ENCODE measurements at regions of chr4 and their contacts with region 1.

Region 1: DNA sequence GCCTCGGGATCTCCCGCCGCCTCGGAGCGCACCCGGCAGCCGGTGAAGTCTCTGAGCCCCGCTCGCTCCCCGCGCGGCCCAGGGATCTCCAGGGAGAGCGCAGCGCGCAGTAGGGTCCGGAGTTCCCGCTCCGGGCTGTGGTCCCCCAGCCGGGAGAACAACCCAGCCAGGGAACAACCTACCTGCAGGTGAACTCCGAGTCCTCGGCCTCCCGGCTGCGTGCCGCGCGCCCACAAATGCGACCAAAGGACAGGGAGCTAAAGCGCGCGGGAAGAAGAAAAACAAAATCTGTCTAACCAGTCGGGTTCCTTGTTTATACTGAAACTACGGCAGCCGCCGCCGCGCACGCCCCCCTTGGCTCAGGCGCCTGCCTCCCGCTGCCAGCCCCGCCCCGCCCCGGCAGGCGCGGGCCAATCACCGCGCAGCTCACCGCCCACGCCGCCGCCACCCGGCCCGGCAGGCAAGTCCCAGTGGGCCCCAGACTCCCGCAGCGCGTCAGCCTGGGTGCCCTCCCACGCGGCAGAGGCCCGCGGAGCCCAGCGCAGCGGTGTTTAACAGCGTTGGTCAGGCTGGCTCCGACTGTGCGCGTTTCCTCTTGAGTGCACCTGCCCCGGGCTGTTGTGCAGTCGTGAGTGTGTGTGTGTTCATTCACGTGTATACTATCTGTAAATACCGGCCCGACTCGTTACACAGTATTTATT is at the start of gene RASGEF1B:
- DNase-seq: peak; percentile 91 to 95 (median 92)
- ATAC-seq: peak; percentile 93 to 99 (median 98)
- H3K4me3 ChIP-seq: peak within 1 kb of the TSS; percentile 70 to 96 (median 87)
- H3K27ac ChIP-seq: peak within 1 kb of the TSS; percentile 62 to 94 (median 86)
- H3K4me1 ChIP-seq: peaks cover 0 to 46% (median 21%) of the 10 kb centered on the region in 12 donors
- H3K27me3 ChIP-seq: no peaks in the 10 kb centered on the region
- CTCF ChIP-seq: peak in 1 of 12 donors; percentile 5
- POLR2A ChIP-seq: peak in 1 of 2 donors; percentile 72
- total RNA-seq, gene RASGEF1B: 1.8 to 11.9 (median 3.2) TPM

Region 2: DNA sequence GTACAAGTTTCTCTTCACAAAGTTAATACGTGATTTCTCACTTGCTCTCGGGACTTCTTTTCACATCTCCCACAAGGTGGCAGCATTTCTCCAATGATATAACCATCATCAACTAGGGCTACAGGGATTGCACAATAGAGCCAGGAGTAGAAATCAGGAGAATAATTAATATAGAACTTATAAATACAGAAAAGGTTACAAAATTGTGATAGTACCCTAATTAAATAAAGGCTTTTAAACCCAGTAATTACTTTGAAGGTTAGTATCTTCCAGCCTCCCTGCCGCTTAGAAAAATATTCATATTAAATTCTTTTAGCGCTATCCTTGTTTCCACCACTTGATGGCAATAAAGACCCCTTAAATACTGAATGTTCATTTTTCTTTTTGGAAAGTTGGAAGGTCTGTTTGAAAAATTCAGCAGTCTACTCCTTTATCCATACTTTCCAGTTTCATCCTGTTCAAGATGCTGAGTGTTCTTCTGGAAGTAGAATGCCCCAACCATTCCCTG is 65.8 kb before region 1 on chr4:
- intact Hi-C with region 1: loop called in 2 of 10 experiments (anchors 5 to 10 kb)
- DNase-seq: peak in 2 of 5 donors; percentile 32 to 49
- ATAC-seq: peak; percentile 57 to 86 (median 72)
- H3K4me3 ChIP-seq: peak overlapping the region in 5 of 12 donors; percentile 14 to 36 (median 27)
- H3K27ac ChIP-seq: no peak overlapping the region
- H3K4me1 ChIP-seq: peaks cover 0 to 10% (median 0%) of the 10 kb centered on the region in 12 donors
- H3K27me3 ChIP-seq: peaks cover 0 to 3% (median 0%) of the 10 kb centered on the region in 9 donors
- CTCF ChIP-seq: peak; percentile 60 to 88 (median 80)
- POLR2A ChIP-seq: no peak

Region 3: DNA sequence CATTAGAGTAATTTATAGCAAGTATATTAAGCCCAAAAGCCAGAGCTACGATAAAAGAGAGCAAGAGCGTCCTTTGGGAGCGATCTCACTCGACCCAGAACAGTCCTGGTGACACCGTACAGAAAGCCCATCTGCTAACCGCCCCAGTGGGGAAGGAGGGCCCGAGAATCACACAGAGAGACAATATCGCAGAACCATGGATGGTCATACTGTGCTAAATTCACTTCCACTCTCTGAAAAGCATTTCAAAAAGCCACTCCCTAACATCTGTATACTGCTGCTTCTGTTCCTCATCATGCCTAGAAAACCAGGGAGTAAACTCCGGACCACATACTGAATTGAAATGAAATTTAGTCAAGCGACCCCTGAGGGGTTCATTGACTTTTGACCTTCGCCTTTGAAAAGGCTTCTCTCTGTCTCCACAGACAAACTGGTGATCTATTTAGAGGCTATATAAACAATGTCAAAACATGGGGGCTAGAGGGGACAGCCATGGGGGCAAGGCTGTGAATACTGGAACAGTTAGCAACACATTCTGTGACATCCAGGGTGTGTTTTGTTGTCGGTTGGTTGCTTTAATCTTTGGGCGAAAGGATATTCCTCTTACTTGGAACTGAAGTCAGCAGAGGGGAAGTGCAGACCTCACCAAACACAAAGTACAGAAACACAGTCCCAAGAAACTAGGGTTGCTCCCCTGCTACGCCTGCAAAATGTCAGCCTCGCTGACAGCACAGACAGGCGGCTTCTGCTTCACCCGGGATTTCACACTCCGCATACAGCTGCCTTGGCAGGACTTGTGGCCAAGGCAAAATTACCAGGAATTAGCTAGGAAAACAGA is 129.0 kb after region 1 on chr4:
- intact Hi-C with region 1: loop called in 2 of 10 experiments (anchors 5 to 10 kb)
- DNase-seq: peak; percentile 66 to 84 (median 77)
- ATAC-seq: peak; percentile 95 to 97 (median 96)
- H3K4me3 ChIP-seq: peak overlapping the region in 2 of 12 donors; percentile 23 to 28
- H3K27ac ChIP-seq: peak overlapping the region in 9 of 12 donors; percentile 3 to 74 (median 62)
- H3K4me1 ChIP-seq: peaks cover 0 to 37% (median 14%) of the 10 kb centered on the region in 12 donors
- H3K27me3 ChIP-seq: no peaks in the 10 kb centered on the region
- CTCF ChIP-seq: no peak
- POLR2A ChIP-seq: no peak

Region 4: DNA sequence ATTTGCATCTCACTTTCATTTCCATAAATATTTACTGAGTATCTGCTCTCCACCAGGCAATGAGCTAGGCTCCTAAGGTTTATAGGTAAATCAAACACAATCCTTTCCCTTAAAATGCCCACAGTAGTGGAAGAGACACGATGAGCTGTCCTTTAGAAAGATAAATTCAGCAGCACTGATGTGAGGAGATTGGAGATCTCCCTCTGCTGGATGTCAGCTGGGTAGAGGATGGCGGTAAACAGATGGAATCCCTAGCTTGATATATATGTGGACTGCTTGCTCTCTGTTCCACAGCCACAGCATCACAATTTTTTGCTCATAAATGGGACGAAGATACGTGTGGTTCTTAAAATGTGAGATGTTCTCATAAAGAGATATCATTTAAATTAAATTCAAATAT is 216.3 kb after region 1 on chr4:
- intact Hi-C with region 1: loop called in 1 of 10 experiments (anchors 10 kb)
- DNase-seq: no peak
- ATAC-seq: no peak
- H3K4me3 ChIP-seq: no peak overlapping the region
- H3K27ac ChIP-seq: no peak overlapping the region
- H3K4me1 ChIP-seq: peaks cover 0 to 11% (median 0%) of the 10 kb centered on the region in 12 donors
- H3K27me3 ChIP-seq: no peaks in the 10 kb centered on the region
- CTCF ChIP-seq: peak in 2 of 12 donors; percentile 13 to 18
- POLR2A ChIP-seq: no peak

Region 5: GRCh38 chr4:81844717-81845116 is 373.0 kb after region 1 on chr4:
- intact Hi-C with region 1: loop called (anchors 1 to 2 kb)
- DNase-seq: peak in 4 of 5 donors; percentile 49 to 67 (median 54)
- ATAC-seq: peak; percentile 80 to 96 (median 88)
- H3K4me3 ChIP-seq: no peak overlapping the region
- H3K27ac ChIP-seq: no peak overlapping the region
- H3K4me1 ChIP-seq: peaks cover 0 to 10% (median 3%) of the 10 kb centered on the region in 12 donors
- H3K27me3 ChIP-seq: no peaks in the 10 kb centered on the region
- CTCF ChIP-seq: peak; percentile 65 to 91 (median 78)
- POLR2A ChIP-seq: no peak

Region 6: GRCh38 chr4:81966676-81967075 is 494.9 kb after region 1 on chr4:
- intact Hi-C with region 1: no loop called
- DNase-seq: no peak
- ATAC-seq: no peak
- H3K4me3 ChIP-seq: no peak overlapping the region
- H3K27ac ChIP-seq: no peak overlapping the region
- H3K4me1 ChIP-seq: no peaks in the 10 kb centered on the region
- H3K27me3 ChIP-seq: no peaks in the 10 kb centered on the region
- CTCF ChIP-seq: no peak
- POLR2A ChIP-seq: no peak

Region 7: GRCh38 chr4:82201805-82202641 is 730.3 kb after region 1 on chr4:
- intact Hi-C with region 1: loop called in 4 of 10 experiments (anchors 5 kb)
- DNase-seq: peak in 2 of 5 donors; percentile 10 to 40
- ATAC-seq: peak in 1 of 4 donors; percentile 51
- H3K4me3 ChIP-seq: no peak overlapping the region
- H3K27ac ChIP-seq: no peak overlapping the region
- H3K4me1 ChIP-seq: no peaks in the 10 kb centered on the region
- H3K27me3 ChIP-seq: no peaks in the 10 kb centered on the region
- CTCF ChIP-seq: peak; percentile 19 to 60 (median 52)
- POLR2A ChIP-seq: no peak